ENCODE measurements at regions of chr1 and their contacts with region 1.

Region 1: GRCh38 chr1:170967042-170967910 is 31.9 kb downstream of the MROH9 start:
- DNase-seq: no peak
- H3K4me3 Mint-ChIP-seq: no peak overlapping the region
- H3K27ac Mint-ChIP-seq: no peak overlapping the region
- H3K4me1 Mint-ChIP-seq: no peaks in the 10 kb centered on the region
- H3K27me3 Mint-ChIP-seq: peaks cover 18% of the 10 kb centered on the region

Region 2: DNA sequence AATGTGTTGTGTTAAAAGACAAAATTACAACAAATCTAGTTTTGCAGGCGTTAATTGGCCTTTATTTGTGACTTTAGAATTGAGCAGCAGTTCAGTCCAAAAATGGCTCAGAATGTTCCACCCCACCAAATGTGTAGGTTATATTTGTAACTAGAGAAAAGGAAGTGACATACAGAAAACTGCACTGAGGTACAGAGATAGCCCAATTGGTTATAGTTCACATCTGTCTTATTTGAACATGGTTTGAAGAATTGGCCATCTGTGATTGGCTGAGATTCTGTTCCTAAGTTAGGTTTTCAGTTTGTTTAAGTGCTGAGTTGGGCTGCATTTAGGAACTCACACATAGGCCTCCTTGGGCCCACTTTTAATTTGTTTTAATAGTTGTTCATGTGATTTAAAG is 205.8 kb after region 1 on chr1:
- CTCF ChIA-PET with region 1: no interaction called
- POLR2A ChIA-PET with region 1: no interaction called
- intact Hi-C with region 1: no loop called
- DNase-seq: no peak
- H3K4me3 Mint-ChIP-seq: no peak overlapping the region
- H3K27ac Mint-ChIP-seq: no peak overlapping the region
- H3K4me1 Mint-ChIP-seq: no peaks in the 10 kb centered on the region
- H3K27me3 Mint-ChIP-seq: peaks cover 21% of the 10 kb centered on the region

Region 3: GRCh38 chr1:171188388-171189266 is 221.4 kb after region 1 on chr1:
- CTCF ChIA-PET with region 1: interaction called, 4 read pairs
- POLR2A ChIA-PET with region 1: no interaction called
- intact Hi-C with region 1: loop called (anchors 5 kb)
- DNase-seq: peak; percentile 46
- H3K4me3 Mint-ChIP-seq: no peak overlapping the region
- H3K27ac Mint-ChIP-seq: no peak overlapping the region
- H3K4me1 Mint-ChIP-seq: no peaks in the 10 kb centered on the region
- H3K27me3 Mint-ChIP-seq: peaks cover 4% of the 10 kb centered on the region

Region 4: DNA sequence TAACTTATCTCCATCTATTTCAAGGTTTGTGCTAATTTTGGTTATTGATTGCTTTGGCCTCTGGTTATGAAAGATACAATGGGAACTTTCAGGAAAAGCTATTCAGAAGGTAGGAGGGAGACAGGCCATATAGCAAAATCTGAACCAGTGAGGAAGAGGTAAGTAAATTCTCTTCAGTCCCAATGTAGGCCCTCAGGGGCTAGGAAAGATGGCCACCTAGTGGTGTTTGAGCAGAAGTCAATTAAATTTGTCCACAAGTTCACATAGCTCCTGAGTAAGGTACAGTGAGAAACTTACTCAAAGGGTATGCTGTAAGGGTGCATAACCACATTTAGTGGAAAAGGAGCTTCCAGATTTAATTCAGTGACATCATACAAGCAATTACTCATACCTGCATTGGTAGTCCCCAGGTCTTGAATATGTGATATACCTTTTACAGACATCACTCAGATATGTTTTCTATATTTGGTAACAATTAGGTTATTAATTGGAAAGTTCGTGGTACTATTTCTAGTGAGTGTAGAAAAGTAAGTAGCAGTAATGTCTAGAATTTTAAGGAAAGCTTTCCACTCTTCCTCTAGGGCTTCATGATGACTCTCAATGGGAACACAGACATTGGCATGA is 259.6 kb after region 1 on chr1:
- CTCF ChIA-PET with region 1: interaction called, 7 read pairs
- POLR2A ChIA-PET with region 1: no interaction called
- intact Hi-C with region 1: loop called (anchors 2 kb)
- DNase-seq: peak; percentile 33
- H3K4me3 Mint-ChIP-seq: no peak overlapping the region
- H3K27ac Mint-ChIP-seq: no peak overlapping the region
- H3K4me1 Mint-ChIP-seq: no peaks in the 10 kb centered on the region
- H3K27me3 Mint-ChIP-seq: peaks cover 1% of the 10 kb centered on the region

Measured in activated CD4-positive, alpha-beta memory T cell treated with anti-CD3 and anti-CD28 coated beads for 36 hours (primary cell).